Naive thymus-derived CD8-positive, alpha-beta T cell (primary cell): ENCODE measurements at regions of chr13 and their contacts with region 1.

Region 1: GRCh38 chr13:98653463-98653985 is 76.6 kb upstream of the STK24 start:
- DNase-seq: peak; percentile 47 to 82 (median 62)
- ATAC-seq: peak; percentile 93 to 99
- H3K4me3 Mint-ChIP-seq: peak overlapping the region in 9 of 10 donors; percentile 38 to 81 (median 68)
- H3K27ac Mint-ChIP-seq: peak overlapping the region in 5 of 10 donors; percentile 54 to 82 (median 60)
- H3K4me1 Mint-ChIP-seq: peaks cover 4 to 8% (median 4%) of the 10 kb centered on the region in 4 donors
- H3K27me3 Mint-ChIP-seq: peaks cover 0 to 7% (median 3%) of the 10 kb centered on the region in 5 donors

Region 2: DNA sequence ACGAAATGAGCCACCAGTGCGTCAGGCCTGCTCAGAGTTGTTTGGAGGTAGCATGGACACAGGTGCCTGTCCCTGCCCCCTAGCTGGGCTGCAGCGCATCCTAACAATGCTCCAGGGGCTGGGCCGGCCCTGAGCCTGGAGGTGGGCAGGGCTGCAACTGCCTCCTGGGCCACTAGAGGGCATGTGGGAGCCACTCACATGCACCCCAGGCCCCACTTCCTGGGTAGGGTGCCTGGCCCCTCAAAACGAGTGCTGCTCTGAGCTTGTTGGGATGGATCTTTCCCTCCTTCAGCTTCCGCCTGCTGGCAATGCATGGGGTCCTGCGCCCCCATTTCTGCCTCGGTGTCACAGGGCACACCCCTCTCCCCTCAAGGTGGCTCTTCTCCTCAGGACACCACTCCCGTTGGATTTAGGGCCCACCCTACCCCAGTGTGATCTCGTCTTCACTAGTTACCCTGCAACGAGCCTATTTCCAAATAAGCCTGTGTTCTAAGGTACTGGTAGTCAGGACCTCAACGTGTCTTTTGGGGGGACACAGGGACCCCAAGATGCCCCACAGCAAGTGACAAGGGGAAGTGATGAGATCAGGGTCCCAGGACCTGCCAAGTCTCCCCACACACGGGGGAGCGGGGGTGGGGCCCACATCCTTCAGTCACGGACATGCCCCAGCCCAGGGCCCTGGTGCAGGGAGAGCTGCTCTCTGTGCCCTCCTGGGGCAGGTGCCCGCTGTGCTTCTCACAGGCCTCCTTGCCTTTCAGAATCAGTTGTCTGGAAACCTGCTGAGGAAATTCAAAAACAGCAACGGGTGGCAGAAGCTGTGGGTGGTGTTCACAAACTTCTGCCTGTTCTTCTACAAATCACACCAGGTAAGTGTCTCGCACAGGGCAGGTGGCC is 207.9 kb before region 1 on chr13:
- POLR2A ChIA-PET with region 1: interaction called, 11 read pairs
- DNase-seq: peak; percentile 63 to 85 (median 78)
- ATAC-seq: peak; percentile 96 to 98
- H3K4me3 Mint-ChIP-seq: peak overlapping the region; percentile 22 to 86 (median 60)
- H3K27ac Mint-ChIP-seq: peak overlapping the region; percentile 49 to 94 (median 86)
- H3K4me1 Mint-ChIP-seq: peaks cover 7 to 24% (median 14%) of the 10 kb centered on the region in 4 donors
- H3K27me3 Mint-ChIP-seq: no peaks in the 10 kb centered on the region

Region 3: DNA sequence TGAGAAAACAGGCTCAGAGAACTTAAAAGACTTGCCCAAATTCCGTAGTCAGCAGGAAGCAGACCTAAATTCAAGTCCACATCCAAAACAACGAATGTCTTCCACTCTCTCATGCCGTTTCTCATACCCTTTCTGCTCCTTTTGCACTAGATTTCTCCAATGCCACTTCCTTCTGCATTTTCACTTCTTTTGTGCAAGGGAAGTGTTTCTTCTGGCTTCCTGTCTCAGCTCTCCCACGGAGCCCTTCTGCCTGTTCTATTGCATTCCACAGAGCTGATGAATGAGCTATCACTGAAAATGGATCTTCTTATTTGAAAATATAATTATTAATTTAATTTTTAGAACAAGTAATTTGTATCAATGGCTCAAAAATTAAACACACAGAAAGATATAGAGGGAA is 20.6 kb before region 1 on chr13:
- POLR2A ChIA-PET with region 1: no interaction called
- DNase-seq: no peak
- ATAC-seq: no peak
- H3K4me3 Mint-ChIP-seq: no peak overlapping the region
- H3K27ac Mint-ChIP-seq: no peak overlapping the region
- H3K4me1 Mint-ChIP-seq: peaks cover 0 to 2% (median under 1%) of the 10 kb centered on the region in 4 donors
- H3K27me3 Mint-ChIP-seq: peaks cover 0 to 4% (median 0%) of the 10 kb centered on the region in 5 donors